Left cardiac atrium (tissue), 4 donors: ENCODE measurements at regions of chr2 and their contacts with region 1.

Region 1: DNA sequence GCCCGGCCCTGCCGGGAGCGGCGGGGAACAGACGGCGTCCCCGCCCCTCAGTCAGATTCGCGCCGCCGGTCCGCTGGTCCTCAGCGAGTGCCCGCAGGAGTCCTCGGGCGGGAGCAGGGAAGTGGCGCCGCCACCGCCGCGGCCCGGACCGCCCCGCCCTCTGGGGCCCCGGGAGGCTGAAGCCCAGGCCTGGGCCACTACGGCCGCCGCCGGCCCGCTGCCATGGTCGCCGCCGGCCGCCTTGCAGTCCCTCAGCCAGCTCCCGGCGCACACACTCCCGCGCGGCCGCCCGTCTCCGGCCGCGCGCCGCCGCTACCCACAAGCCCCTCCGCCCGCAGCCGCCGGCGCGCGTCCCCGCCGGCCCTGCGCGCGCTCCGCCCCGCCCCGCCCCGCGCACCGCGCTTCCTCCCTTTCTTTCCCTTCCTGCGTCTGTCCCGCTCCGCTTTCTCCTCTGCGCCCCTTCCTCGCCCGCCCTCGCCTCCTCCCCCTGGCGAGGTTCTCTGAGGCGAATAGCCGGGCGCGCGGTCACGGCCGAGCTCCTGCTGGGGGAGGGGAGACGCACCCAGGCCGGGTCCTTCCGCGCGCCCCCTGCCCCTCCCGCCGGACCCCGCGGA is at the start of gene ROCK2:
- DNase-seq: peak; percentile 88
- ATAC-seq: peak; percentile 84 to 90
- total RNA-seq, gene ROCK2: 41.1 to 47.6 TPM

Region 2: GRCh38 chr2:11239666-11240462 is 104.6 kb before region 1 on chr2:
- intact Hi-C with region 1: loop called in 1 of 2 experiments (anchors 5 kb)
- DNase-seq: no peak
- ATAC-seq: peak in 1 of 2 donors; percentile 51

Region 3: DNA sequence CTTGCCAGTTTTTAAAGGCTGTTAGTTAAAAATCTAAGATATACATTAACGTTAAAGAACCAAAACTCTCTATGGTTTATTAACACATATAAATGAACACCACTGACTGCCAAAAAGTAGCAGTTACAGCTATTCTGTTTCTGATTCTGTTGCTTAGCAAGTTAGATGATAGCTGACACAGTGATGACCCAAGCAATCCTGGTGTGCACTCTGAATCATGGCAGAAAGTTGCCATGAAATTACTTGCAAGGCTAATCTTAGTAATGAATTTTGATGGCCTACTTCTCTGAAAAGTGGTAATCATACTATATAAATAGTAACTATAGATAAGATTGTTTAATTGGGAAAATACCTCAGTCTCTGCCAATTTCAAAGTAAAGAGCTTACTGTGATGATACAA is 57.7 kb before region 1 on chr2:
- intact Hi-C with region 1: loop called in 1 of 2 experiments (anchors 10 kb)
- DNase-seq: no peak
- ATAC-seq: peak; percentile 34 to 82

Region 4: GRCh38 chr2:11398747-11399437 is 54.4 kb after region 1 on chr2:
- intact Hi-C with region 1: loop called in 1 of 2 experiments (anchors 5 kb)
- DNase-seq: peak; percentile 58
- ATAC-seq: peak; percentile 52 to 65

Region 5: GRCh38 chr2:11411768-11412448 is 67.5 kb after region 1 on chr2:
- intact Hi-C with region 1: loop called in 1 of 2 experiments (anchors 5 kb)
- DNase-seq: peak; percentile 54
- ATAC-seq: peak; percentile 66 to 72

Region 6: GRCh38 chr2:11465497-11466406 is 121.3 kb after region 1 on chr2 and contains the start of gene E2F6:
- intact Hi-C with region 1: no loop called
- DNase-seq: peak; percentile 93
- ATAC-seq: peak; percentile 93 to 95
- total RNA-seq, gene E2F6: 11.7 to 19.5 TPM